Mucosa of descending colon (tissue), 3 donors: ENCODE measurements at regions of chr15 and their contacts with region 1.

Region 1: GRCh38 chr15:79184465-79184892 is 93.9 kb upstream of the RASGRF1 start:
- DNase-seq: peak in 2 of 3 donors; percentile 63 to 87
- ATAC-seq: peak; percentile 61
- H3K4me3 ChIP-seq: no peak overlapping the region
- H3K4me1 ChIP-seq: no peaks in the 10 kb centered on the region
- CTCF ChIP-seq: peak; percentile 92

Region 2: DNA sequence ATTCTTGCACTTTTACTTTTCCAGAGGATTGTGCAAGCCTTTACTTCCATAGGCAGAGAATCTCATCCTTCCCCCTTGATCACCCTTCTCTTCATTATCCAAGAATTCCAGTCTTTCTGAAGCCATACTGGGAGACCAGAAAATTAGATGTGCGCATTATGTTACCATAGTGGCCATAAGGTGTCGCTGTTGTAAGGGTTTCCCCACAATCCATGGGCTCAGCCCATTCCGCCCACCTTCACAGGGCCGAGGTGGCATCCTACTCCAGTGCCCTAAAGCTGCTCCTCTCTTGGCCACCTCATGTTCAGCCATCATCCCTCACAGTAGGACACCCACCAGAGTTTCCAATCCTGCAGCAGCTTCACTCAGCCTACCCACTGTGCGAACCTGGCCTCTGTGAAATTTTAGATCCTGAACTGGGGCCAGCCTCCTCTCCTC is 274.7 kb before region 1 on chr15:
- intact Hi-C with region 1: loop called in 1 of 2 experiments (anchors 5 kb)
- DNase-seq: peak in 1 of 3 donors; percentile 54
- ATAC-seq: peak; percentile 77
- H3K4me3 ChIP-seq: no peak overlapping the region
- H3K4me1 ChIP-seq: no peaks in the 10 kb centered on the region
- CTCF ChIP-seq: no peak

Region 3: GRCh38 chr15:79028411-79028964 is 156.0 kb before region 1 on chr15:
- intact Hi-C with region 1: loop called (anchors 5 to 10 kb)
- DNase-seq: peak in 1 of 3 donors; percentile 43
- ATAC-seq: no peak
- H3K4me3 ChIP-seq: no peak overlapping the region
- H3K4me1 ChIP-seq: no peaks in the 10 kb centered on the region
- CTCF ChIP-seq: peak; percentile 32

Region 4: DNA sequence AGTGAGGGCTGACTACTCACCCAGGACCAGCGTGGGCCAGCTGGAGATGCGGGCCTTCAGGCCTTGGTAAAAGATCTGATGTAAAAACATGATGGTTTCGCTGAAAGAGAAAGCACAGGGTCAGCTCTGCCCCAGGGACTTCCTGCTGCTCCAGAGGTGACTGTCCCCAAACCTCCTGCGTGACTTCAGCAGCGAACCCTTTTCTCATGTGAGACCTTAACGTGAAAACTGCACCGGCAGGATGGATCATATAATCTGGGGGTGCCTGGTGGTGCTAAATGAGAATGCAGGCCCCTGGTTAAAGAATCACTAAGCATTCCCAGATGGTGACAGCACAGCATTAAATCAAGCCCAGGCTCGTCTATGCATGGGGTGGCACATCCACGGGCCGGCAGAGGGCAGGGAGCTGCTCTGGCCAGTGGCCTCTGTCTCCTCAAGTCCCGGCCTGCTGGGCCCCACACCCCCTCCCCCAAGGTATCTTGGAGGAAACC is 149.3 kb before region 1 on chr15:
- intact Hi-C with region 1: loop called in 1 of 2 experiments (anchors 10 kb)
- DNase-seq: no peak
- ATAC-seq: no peak
- H3K4me3 ChIP-seq: no peak overlapping the region
- H3K4me1 ChIP-seq: no peaks in the 10 kb centered on the region
- CTCF ChIP-seq: no peak

Region 5: GRCh38 chr15:79602731-79603130 is 418.3 kb after region 1 on chr15:
- intact Hi-C with region 1: no loop called
- DNase-seq: no peak
- ATAC-seq: no peak
- H3K4me3 ChIP-seq: no peak overlapping the region
- H3K4me1 ChIP-seq: no peaks in the 10 kb centered on the region
- CTCF ChIP-seq: no peak